Mammary epithelial cell (primary cell): ENCODE measurements at regions of chrX and their contacts with region 1.

Region 1: GRCh38 chrX:131633285-131633917 is 89.5 kb downstream of the OR13H1 start:
- DNase-seq: peak; percentile 34
- H3K4me3 ChIP-seq: no peak overlapping the region
- H3K27ac ChIP-seq: no peak overlapping the region
- H3K4me1 ChIP-seq: no peaks in the 10 kb centered on the region
- H3K27me3 ChIP-seq: peaks cover 2% of the 10 kb centered on the region
- CTCF ChIP-seq: peak; percentile 91

Region 2: GRCh38 chrX:130869239-130869638 is 764.2 kb before region 1 on chrX:
- CTCF ChIA-PET with region 1: no interaction called
- dilution Hi-C with region 1: no loop called
- in situ Hi-C with region 1: no loop called
- intact Hi-C with region 1: no loop called
- DNase-seq: no peak
- H3K4me3 ChIP-seq: no peak overlapping the region
- H3K27ac ChIP-seq: no peak overlapping the region
- H3K4me1 ChIP-seq: no peaks in the 10 kb centered on the region
- H3K27me3 ChIP-seq: no peaks in the 10 kb centered on the region
- CTCF ChIP-seq: no peak

Region 3: DNA sequence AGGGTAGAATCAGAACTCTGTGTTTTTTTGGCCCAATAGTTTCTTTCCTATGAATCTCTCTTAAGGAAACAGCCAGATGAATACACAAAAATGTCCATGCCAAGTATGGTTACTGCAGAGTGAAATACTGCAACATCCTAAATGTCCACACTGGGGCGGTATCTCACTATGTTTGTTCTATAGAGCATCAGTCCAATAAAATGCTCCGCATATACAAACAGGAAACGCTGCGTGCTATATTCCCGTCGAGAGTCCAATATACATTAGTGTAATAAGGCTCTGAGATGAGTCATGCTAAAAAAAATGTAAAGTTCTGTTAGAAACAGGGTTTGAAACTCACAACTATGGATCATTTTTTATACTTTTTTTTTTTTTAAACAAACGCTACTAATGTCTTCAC is 657.5 kb before region 1 on chrX:
- CTCF ChIA-PET with region 1: no interaction called
- dilution Hi-C with region 1: no loop called
- in situ Hi-C with region 1: loop called (anchors 10 to 25 kb)
- intact Hi-C with region 1: loop called (anchors 1 kb)
- DNase-seq: peak; percentile 30
- H3K4me3 ChIP-seq: no peak overlapping the region
- H3K27ac ChIP-seq: no peak overlapping the region
- H3K4me1 ChIP-seq: no peaks in the 10 kb centered on the region
- H3K27me3 ChIP-seq: no peaks in the 10 kb centered on the region
- CTCF ChIP-seq: peak; percentile 66 to 68

Region 4: GRCh38 chrX:130994671-130995070 is 638.7 kb before region 1 on chrX:
- CTCF ChIA-PET with region 1: no interaction called
- dilution Hi-C with region 1: no loop called
- in situ Hi-C with region 1: loop called in 1 of 2 experiments (anchors 25 kb)
- intact Hi-C with region 1: loop called (anchors 1 kb)
- DNase-seq: no peak
- H3K4me3 ChIP-seq: no peak overlapping the region
- H3K27ac ChIP-seq: no peak overlapping the region
- H3K4me1 ChIP-seq: no peaks in the 10 kb centered on the region
- H3K27me3 ChIP-seq: peaks cover 4% of the 10 kb centered on the region
- CTCF ChIP-seq: peak; percentile 56 to 60

Region 5: GRCh38 chrX:131262737-131263679 is 370.4 kb before region 1 on chrX:
- CTCF ChIA-PET with region 1: no interaction called
- dilution Hi-C with region 1: no loop called
- in situ Hi-C with region 1: no loop called
- intact Hi-C with region 1: loop called (anchors 1 kb)
- DNase-seq: no peak
- H3K4me3 ChIP-seq: no peak overlapping the region
- H3K27ac ChIP-seq: no peak overlapping the region
- H3K4me1 ChIP-seq: no peaks in the 10 kb centered on the region
- H3K27me3 ChIP-seq: no peaks in the 10 kb centered on the region
- CTCF ChIP-seq: peak; percentile 34 to 45

Region 6: DNA sequence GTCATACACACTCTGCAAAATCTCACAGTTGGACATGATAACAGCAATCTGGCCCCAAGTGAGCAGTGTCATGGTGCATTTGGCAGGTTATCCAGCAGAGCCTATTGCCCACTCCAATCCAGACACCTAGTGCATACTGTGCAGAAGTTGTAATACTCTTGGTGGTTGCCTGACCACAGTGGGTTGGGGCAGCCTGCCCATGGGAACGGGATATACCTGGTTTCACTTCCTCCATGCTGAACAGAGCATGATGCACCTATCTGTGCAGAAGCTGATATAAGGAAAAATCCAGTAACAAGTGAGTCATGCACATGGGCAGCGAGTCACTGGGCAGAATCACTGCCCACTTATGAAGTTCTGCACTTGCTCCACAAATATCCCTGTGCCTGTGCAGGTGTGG is 239.0 kb before region 1 on chrX:
- CTCF ChIA-PET with region 1: no interaction called
- dilution Hi-C with region 1: no loop called
- in situ Hi-C with region 1: no loop called
- intact Hi-C with region 1: no loop called
- DNase-seq: no peak
- H3K4me3 ChIP-seq: no peak overlapping the region
- H3K27ac ChIP-seq: no peak overlapping the region
- H3K4me1 ChIP-seq: no peaks in the 10 kb centered on the region
- H3K27me3 ChIP-seq: no peaks in the 10 kb centered on the region
- CTCF ChIP-seq: no peak

Region 7: GRCh38 chrX:131548995-131549394 is 84.4 kb before region 1 on chrX:
- CTCF ChIA-PET with region 1: no interaction called
- dilution Hi-C with region 1: no loop called
- in situ Hi-C with region 1: no loop called
- intact Hi-C with region 1: no loop called
- DNase-seq: no peak
- H3K4me3 ChIP-seq: no peak overlapping the region
- H3K27ac ChIP-seq: no peak overlapping the region
- H3K4me1 ChIP-seq: no peaks in the 10 kb centered on the region
- H3K27me3 ChIP-seq: no peaks in the 10 kb centered on the region
- CTCF ChIP-seq: no peak

Region 8: GRCh38 chrX:131693359-131693758 is 60.0 kb after region 1 on chrX:
- CTCF ChIA-PET with region 1: no interaction called
- dilution Hi-C with region 1: no loop called
- in situ Hi-C with region 1: no loop called
- intact Hi-C with region 1: no loop called
- DNase-seq: no peak
- H3K4me3 ChIP-seq: no peak overlapping the region
- H3K27ac ChIP-seq: no peak overlapping the region
- H3K4me1 ChIP-seq: no peaks in the 10 kb centered on the region
- H3K27me3 ChIP-seq: no peaks in the 10 kb centered on the region
- CTCF ChIP-seq: no peak